SK-N-SH (cell line): ENCODE measurements at regions of chr19 and their contacts with region 1.

Region 1: GRCh38 chr19:44723952-44724319 is 24.6 kb upstream of the BCL3 start:
- DNase-seq: peak; percentile 87
- H3K4me3 ChIP-seq: no peak overlapping the region; a peak in 1 of 4 replicates
- H3K27ac ChIP-seq: no peak overlapping the region
- H3K4me1 ChIP-seq: peaks cover 0 to 11% of the 10 kb centered on the region in 2 experiments; a peak in 3 of 4 replicates
- H3K27me3 ChIP-seq: no peaks in the 10 kb centered on the region
- CTCF ChIP-seq: peak; percentile 96
- EP300 ChIP-seq: no peak
- RAD21 ChIP-seq: peak; percentile 97

Region 2: GRCh38 chr19:44671400-44671799 is 52.5 kb before region 1 on chr19 and contains the start of gene CEACAM19:
- CTCF ChIA-PET with region 1: no interaction called
- POLR2A ChIA-PET with region 1: no interaction called
- DNase-seq: no peak
- H3K4me3 ChIP-seq: no peak within 1 kb of the TSS
- H3K27ac ChIP-seq: no peak within 1 kb of the TSS
- H3K4me1 ChIP-seq: no peaks in the 10 kb centered on the region
- H3K27me3 ChIP-seq: no peaks in the 10 kb centered on the region
- CTCF ChIP-seq: no peak
- EP300 ChIP-seq: no peak
- RAD21 ChIP-seq: no peak
- polyA plus RNA-seq, gene CEACAM19: 1.4 and 2.0 TPM in 2 replicates

Region 3: DNA sequence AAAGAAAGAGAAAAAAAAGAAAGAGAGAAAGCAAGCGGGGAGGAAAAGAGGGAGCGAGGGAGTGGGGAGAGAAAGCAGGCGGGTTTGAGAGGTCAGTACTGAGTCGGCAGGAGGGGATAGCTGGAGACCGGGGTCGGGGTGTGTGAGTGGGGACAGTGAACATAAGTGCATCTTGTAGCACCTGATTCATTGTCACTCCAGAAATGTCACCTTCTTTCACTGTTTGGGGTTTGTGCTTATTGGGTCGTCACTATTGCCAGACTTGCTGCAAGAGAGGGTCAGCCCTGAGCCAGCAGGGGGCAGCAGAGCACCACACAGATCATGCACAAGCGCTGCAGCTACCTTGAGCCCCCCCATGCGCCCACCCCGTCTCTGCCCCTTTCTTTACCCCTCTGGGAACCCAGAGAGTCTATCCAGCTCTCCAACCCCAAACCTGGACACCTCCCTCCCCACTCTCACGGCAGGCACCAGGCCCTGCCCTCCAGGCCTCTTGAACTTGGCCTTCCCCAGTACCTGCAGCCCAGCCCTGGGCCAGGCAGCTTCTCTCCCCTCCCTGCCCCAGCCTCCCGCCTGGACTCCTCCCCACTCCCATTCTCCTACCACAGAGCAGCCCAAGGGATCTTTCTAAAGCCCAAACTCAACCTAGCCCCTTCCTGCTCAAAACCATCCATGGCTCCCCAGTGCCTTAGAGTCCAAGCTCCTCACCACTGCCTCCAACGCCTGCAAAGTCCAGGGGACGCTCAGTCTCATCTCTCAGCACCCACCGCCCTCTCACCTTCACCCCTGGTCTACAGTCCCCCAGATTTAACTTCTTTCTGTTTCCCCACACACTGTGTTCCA is 34.7 kb before region 1 on chr19:
- CTCF ChIA-PET with region 1: interaction called, 57 read pairs
- POLR2A ChIA-PET with region 1: no interaction called
- DNase-seq: peak; percentile 78
- H3K4me3 ChIP-seq: no peak overlapping the region; a peak in 1 of 4 replicates
- H3K27ac ChIP-seq: no peak overlapping the region
- H3K4me1 ChIP-seq: peaks cover 0 to 16% of the 10 kb centered on the region in 2 experiments; a peak in 3 of 4 replicates
- H3K27me3 ChIP-seq: no peaks in the 10 kb centered on the region
- CTCF ChIP-seq: peak; percentile 92
- EP300 ChIP-seq: no peak
- RAD21 ChIP-seq: peak; percentile 78

Region 4: DNA sequence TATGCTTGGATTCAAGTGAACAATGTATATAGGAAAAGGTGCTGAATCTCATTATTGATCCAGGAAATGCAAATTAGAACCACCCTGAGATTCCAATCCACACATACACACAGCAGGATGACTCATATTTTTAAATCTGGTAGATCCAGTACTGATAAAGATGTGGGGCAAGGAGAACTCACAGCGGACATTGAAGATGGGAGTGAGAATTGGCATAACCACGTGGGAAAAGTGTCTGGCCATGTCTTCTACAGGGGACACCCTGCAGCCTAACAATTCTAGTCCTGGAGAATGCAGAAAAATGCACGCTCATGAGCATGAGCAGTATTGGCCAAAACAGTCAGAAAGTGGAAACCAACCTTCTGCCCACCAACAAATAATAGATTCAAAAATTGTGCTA is 11.1 kb after region 1 on chr19:
- CTCF ChIA-PET with region 1: interaction called, 92 read pairs
- POLR2A ChIA-PET with region 1: no interaction called
- DNase-seq: peak; percentile 1
- H3K4me3 ChIP-seq: no peak overlapping the region
- H3K27ac ChIP-seq: 0 out of 4 replicates have a peak overlapping the region, but pooled peaks of 1 of the 2 experiments have one; percentile 7
- H3K4me1 ChIP-seq: no peaks in the 10 kb centered on the region; a peak in 1 of 4 replicates
- H3K27me3 ChIP-seq: no peaks in the 10 kb centered on the region
- CTCF ChIP-seq: no peak
- EP300 ChIP-seq: peak in 1 of 2 experiments; percentile 34; a peak in 1 of 4 replicates
- RAD21 ChIP-seq: no peak

Region 5: GRCh38 chr19:44770550-44771257 is 46.8 kb after region 1 on chr19:
- CTCF ChIA-PET with region 1: interaction called, 598 read pairs
- POLR2A ChIA-PET with region 1: interaction called, 4 read pairs
- DNase-seq: peak; percentile 94
- H3K4me3 ChIP-seq: no peak overlapping the region; a peak in 1 of 4 replicates
- H3K27ac ChIP-seq: no peak overlapping the region
- H3K4me1 ChIP-seq: peaks cover 0 to 6% of the 10 kb centered on the region in 2 experiments; a peak in 1 of 4 replicates
- H3K27me3 ChIP-seq: no peaks in the 10 kb centered on the region
- CTCF ChIP-seq: peak; percentile 87
- EP300 ChIP-seq: no peak
- RAD21 ChIP-seq: peak; percentile 94

Region 6: GRCh38 chr19:44800461-44800860 is 76.5 kb after region 1 on chr19:
- CTCF ChIA-PET with region 1: interaction called, 70 read pairs
- POLR2A ChIA-PET with region 1: no interaction called
- DNase-seq: peak; percentile 89
- H3K4me3 ChIP-seq: peak overlapping the region in 1 of 2 experiments; percentile 41; a peak in 1 of 4 replicates
- H3K27ac ChIP-seq: no peak overlapping the region
- H3K4me1 ChIP-seq: no peaks in the 10 kb centered on the region; a peak in 1 of 4 replicates
- H3K27me3 ChIP-seq: peaks cover 34% of the 10 kb centered on the region
- CTCF ChIP-seq: peak; percentile 86
- EP300 ChIP-seq: no peak
- RAD21 ChIP-seq: peak; percentile 75

Region 7: DNA sequence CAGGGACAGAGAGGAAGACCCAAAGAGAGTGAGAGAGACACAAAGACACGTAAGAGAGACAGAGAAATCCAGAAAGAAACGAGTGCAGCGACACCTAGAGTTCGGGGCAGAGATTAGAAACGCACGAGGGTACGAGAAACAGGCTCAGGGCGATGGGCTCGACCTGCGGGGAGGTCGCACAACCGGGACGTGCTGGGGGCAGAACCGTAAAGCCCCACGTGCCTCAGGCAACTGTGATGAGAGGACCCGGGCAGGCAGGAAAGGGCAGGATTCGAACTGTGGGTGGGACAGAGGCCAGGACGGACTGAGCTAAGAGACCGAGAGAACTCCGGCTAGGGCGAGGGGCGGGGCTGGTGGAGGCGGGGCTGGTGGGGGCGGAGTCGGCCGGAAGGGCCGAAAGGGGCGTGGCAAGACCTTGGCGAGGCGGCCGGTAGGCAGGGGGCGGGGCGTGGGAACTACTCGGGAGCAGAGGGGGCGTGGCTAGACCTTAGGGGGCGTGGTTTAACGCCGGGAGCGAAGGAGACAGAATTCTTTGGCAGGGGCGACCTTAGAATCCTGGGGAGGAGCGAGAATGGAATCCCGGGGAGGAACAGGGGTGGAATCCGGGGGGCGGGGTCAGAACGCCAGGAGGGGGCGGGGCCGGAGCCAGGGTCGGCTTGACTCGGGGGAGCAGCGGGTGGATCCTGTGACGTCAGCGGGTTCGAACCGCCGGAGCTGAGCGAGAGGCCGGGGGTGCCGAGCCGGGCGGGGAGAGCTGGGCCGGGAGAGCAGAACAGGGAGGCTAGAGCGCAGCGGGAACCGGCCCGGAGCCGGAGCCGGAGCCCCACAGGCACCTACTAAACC is 121.9 kb after region 1 on chr19 and contains the start of gene NECTIN2:
- CTCF ChIA-PET with region 1: interaction called, 20 read pairs
- POLR2A ChIA-PET with region 1: no interaction called
- DNase-seq: peak; percentile 98
- H3K4me3 ChIP-seq: peak within 1 kb of the TSS; percentile 71 to 98
- H3K27ac ChIP-seq: peak within 1 kb of the TSS; percentile 61 to 92
- H3K4me1 ChIP-seq: peaks cover 19 to 21% of the 10 kb centered on the region in 2 experiments; a peak in 3 of 4 replicates
- H3K27me3 ChIP-seq: no peaks in the 10 kb centered on the region
- CTCF ChIP-seq: peak; percentile 93
- EP300 ChIP-seq: no peak
- RAD21 ChIP-seq: peak; percentile 50
- polyA plus RNA-seq, gene NECTIN2: 96.6 and 121 TPM in 2 replicates